MCF 10A (cell line): ENCODE measurements at regions of chr4 and their contacts with region 1.

Region 1: GRCh38 chr4:7811536-7812191 is 128.0 kb downstream of the AFAP1 start:
- DNase-seq: no peak
- H3K4me3 Mint-ChIP-seq: no peak overlapping the region
- H3K27ac Mint-ChIP-seq: no peak overlapping the region
- H3K4me1 Mint-ChIP-seq: no peaks in the 10 kb centered on the region
- H3K27me3 Mint-ChIP-seq: no peaks in the 10 kb centered on the region
- CTCF ChIP-seq: no peak

Region 2: GRCh38 chr4:7238300-7238960 is 573.2 kb before region 1 on chr4:
- CTCF ChIA-PET with region 1: no interaction called
- POLR2A ChIA-PET with region 1: no interaction called
- intact Hi-C with region 1: no loop called
- DNase-seq: no peak
- H3K4me3 Mint-ChIP-seq: no peak overlapping the region
- H3K27ac Mint-ChIP-seq: no peak overlapping the region
- H3K4me1 Mint-ChIP-seq: no peaks in the 10 kb centered on the region
- H3K27me3 Mint-ChIP-seq: peaks cover 13% of the 10 kb centered on the region
- CTCF ChIP-seq: no peak

Region 3: DNA sequence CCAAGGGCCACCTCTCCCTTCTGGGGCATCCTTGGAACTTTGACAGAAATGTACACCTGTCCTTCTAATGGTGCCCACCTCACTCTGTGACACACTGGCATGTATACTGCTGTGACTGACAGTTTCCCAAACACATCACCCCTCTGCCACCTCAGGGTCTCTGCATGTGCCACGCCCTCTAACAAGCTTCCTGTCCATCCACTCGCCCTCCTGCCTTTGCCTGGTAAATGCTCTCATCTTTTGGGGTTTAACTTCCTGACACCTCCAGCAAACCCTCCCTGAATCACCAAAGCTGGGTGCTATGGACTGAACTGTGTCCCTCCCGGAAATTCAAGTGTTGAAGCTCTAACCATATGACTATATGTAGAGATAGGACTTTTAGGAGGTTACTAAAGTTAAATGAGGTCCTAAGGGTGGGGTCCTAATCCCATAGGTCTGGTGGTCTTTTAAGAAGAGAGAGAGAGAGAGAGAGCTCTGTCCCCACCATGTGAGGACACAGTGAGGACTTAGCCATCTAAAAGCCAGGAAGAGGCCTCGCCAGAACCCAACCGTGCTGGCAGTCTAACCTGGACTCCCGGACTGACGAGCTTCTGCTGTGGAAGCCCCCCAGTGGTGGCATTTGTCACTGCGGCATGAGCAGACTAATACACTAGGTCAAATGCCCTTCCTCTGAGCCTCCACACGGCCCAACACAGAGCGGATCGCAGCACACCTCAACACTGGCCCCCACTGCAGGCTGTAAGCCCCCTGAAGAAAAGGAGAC is 32.3 kb after region 1 on chr4:
- CTCF ChIA-PET with region 1: interaction called, 3 read pairs
- POLR2A ChIA-PET with region 1: interaction called, 4 read pairs
- intact Hi-C with region 1: loop called (anchors 2 kb)
- DNase-seq: peak; percentile 76
- H3K4me3 Mint-ChIP-seq: peak overlapping the region; percentile 65
- H3K27ac Mint-ChIP-seq: peak overlapping the region; percentile 94
- H3K4me1 Mint-ChIP-seq: peaks cover 38% of the 10 kb centered on the region
- H3K27me3 Mint-ChIP-seq: no peaks in the 10 kb centered on the region
- CTCF ChIP-seq: peak; percentile 38